Activated naive CD4-positive, alpha-beta T cell treated with anti-CD3 and anti-CD28 coated beads for 36 hours (primary cell): ENCODE measurements at regions of chr5 and their contacts with region 1.

Region 1: GRCh38 chr5:177403792-177404640 is 3.6 kb upstream of the PFN3 start:
- DNase-seq: peak; percentile 90
- H3K4me3 Mint-ChIP-seq: peak overlapping the region; percentile 78
- H3K27ac Mint-ChIP-seq: no peak overlapping the region
- H3K4me1 Mint-ChIP-seq: peaks cover 19% of the 10 kb centered on the region
- H3K27me3 Mint-ChIP-seq: peaks cover 15% of the 10 kb centered on the region

Region 2: GRCh38 chr5:177311723-177312648 is 92.0 kb before region 1 on chr5 and contains the start of gene MXD3:
- CTCF ChIA-PET with region 1: interaction called, 42 read pairs
- intact Hi-C with region 1: no loop called
- DNase-seq: peak; percentile 99
- H3K4me3 Mint-ChIP-seq: peak within 1 kb of the TSS; percentile 97
- H3K27ac Mint-ChIP-seq: peak within 1 kb of the TSS; percentile 82
- H3K4me1 Mint-ChIP-seq: peaks cover 20% of the 10 kb centered on the region
- H3K27me3 Mint-ChIP-seq: peaks cover 3% of the 10 kb centered on the region
- total RNA-seq, gene MXD3: 45.0 to 51.7 TPM

Region 3: DNA sequence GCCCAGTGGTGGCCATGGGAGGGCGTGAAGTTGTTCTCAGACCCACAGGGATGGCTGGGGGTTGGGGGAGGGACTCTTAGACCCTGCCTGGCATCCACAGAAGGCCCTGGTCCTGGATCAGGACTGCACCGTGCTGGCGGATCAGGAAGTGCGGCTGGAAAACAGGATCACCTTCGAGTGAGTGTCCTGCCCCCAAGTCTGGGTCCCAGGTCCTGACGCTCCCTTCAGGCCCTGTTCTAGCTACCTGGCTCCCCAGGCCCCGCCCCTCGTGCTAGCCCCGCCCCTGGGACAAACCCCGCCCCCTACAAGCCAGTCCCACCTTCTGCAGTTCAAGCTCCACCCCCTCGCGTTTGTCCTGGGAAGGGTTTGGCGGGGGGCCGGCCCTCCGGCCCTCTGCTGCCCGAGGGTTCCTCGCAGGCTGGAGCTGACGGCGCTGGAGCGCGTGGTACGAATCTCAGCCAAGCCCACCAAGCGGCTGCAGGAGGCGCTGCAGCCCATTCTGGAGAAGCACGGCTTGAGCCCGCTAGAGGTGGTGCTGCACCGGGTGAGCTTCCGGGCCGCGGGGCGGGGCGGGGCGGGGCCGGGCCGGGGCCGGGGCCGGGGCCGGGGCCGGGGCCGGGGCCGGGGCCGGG is 33.4 kb before region 1 on chr5:
- CTCF ChIA-PET with region 1: interaction called, 40 read pairs
- intact Hi-C with region 1: loop called (anchors 1 kb)
- DNase-seq: peak; percentile 75
- H3K4me3 Mint-ChIP-seq: peak overlapping the region; percentile 74
- H3K27ac Mint-ChIP-seq: no peak overlapping the region
- H3K4me1 Mint-ChIP-seq: peaks cover 70% of the 10 kb centered on the region
- H3K27me3 Mint-ChIP-seq: no peaks in the 10 kb centered on the region

Region 4: GRCh38 chr5:177414481-177414880 is 10.5 kb after region 1 on chr5:
- CTCF ChIA-PET with region 1: interaction called, 22 read pairs
- intact Hi-C with region 1: no loop called
- DNase-seq: no peak
- H3K4me3 Mint-ChIP-seq: no peak overlapping the region
- H3K27ac Mint-ChIP-seq: no peak overlapping the region
- H3K4me1 Mint-ChIP-seq: peaks cover 33% of the 10 kb centered on the region
- H3K27me3 Mint-ChIP-seq: no peaks in the 10 kb centered on the region

Region 5: DNA sequence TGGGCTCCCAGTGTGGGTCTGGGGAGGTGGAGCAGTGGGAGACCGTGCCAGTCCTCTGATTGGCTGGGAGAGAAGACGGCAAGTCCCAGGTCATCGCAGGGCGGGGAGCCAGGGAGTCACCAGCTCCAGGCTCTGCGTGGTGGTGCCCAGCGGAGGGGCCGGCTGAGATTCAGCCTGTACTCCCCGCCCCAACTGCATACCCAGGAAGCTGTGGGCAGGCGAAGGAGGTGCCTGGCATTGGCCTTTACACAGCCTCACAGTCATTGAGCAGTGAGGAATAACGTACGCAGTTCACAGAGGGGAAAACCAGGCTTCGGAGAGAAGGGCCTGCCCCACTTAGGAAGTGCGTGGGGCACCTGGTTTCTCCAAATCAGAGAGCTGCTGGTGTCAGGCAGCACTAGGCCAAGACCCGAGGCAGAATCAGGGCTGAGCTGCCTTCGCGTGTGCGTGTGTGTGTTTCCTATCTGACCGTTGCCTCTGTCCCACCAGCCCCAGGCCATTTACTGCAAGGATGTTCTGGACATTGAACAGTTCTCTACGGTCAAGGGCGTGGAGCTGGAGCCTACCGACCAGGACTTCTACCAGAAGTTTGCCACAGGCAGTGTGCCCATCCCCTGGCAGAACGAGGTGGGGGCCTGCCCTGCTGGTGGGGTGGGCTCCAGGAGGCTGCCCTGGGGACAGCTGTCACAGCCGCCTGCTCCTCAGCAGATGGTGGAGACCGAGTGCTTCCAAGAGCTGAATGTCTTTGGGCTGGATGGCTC is 36.4 kb after region 1 on chr5:
- CTCF ChIA-PET with region 1: interaction called, 131 read pairs
- intact Hi-C with region 1: loop called (anchors 2 kb)
- DNase-seq: peak; percentile 84
- H3K4me3 Mint-ChIP-seq: no peak overlapping the region
- H3K27ac Mint-ChIP-seq: peak overlapping the region; percentile 90
- H3K4me1 Mint-ChIP-seq: peaks cover 66% of the 10 kb centered on the region
- H3K27me3 Mint-ChIP-seq: no peaks in the 10 kb centered on the region

Region 6: GRCh38 chr5:177497292-177498033 is 93.4 kb after region 1 on chr5 and contains the start of gene PDLIM7:
- CTCF ChIA-PET with region 1: interaction called, 44 read pairs
- intact Hi-C with region 1: loop called (anchors 1 kb)
- DNase-seq: peak; percentile 96
- H3K4me3 Mint-ChIP-seq: peak within 1 kb of the TSS; percentile 84
- H3K27ac Mint-ChIP-seq: no peak within 1 kb of the TSS
- H3K4me1 Mint-ChIP-seq: peaks cover 35% of the 10 kb centered on the region
- H3K27me3 Mint-ChIP-seq: peaks cover 14% of the 10 kb centered on the region
- total RNA-seq, gene PDLIM7: 41.2 to 42.2 TPM